Activated naive CD4-positive, alpha-beta T cell treated with anti-CD3 and anti-CD28 coated beads for 36 hours (primary cell): ENCODE measurements at regions of chr22 and their contacts with region 1.

Region 1: DNA sequence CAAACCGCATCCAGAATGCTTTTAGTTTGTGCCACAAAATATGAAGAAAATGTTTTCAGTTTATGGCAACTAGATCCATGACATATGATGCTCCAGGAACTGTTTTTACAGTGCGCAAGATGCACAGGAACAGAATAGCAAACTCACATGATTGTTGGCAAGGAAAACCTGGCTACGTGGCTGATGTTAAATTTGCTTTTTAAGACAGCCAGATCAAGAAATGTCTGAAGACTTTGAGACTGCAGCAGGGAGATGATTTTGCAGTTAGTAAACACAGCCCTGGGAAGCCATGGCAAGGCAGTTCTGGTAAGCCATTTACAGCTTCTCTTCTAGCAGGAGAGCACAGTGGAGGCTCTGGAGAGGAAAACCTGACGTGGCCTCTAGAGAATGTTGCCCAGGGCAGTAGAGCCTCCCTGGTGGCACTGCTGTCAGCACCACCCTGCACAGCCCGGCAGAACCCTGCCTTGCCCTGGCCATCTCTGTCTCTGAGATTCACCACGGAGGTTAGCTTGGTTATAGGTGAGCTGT is 69.8 kb upstream of the TNRC6B start:
- DNase-seq: peak; percentile 55
- H3K4me3 Mint-ChIP-seq: peak overlapping the region; percentile 66
- H3K27ac Mint-ChIP-seq: peak overlapping the region; percentile 87
- H3K4me1 Mint-ChIP-seq: peaks cover 81% of the 10 kb centered on the region
- H3K27me3 Mint-ChIP-seq: no peaks in the 10 kb centered on the region

Region 2: GRCh38 chr22:40088818-40089217 is 19.1 kb before region 1 on chr22:
- CTCF ChIA-PET with region 1: interaction called, 12 read pairs
- intact Hi-C with region 1: no loop called
- DNase-seq: no peak
- H3K4me3 Mint-ChIP-seq: no peak overlapping the region
- H3K27ac Mint-ChIP-seq: no peak overlapping the region
- H3K4me1 Mint-ChIP-seq: peaks cover 57% of the 10 kb centered on the region
- H3K27me3 Mint-ChIP-seq: no peaks in the 10 kb centered on the region